Ascending aorta (tissue), 2 donors: ENCODE measurements at regions of chr10 and their contacts with region 1.

Region 1: GRCh38 chr10:69425511-69426298 is 9.0 kb upstream of the TACR2 start:
- DNase-seq: no peak
- H3K4me3 ChIP-seq: no peak overlapping the region
- H3K27ac ChIP-seq: no peak overlapping the region
- H3K4me1 ChIP-seq: no peaks in the 10 kb centered on the region
- H3K27me3 ChIP-seq: no peaks in the 10 kb centered on the region
- CTCF ChIP-seq: no peak

Region 2: GRCh38 chr10:69479240-69480067 is 53.7 kb after region 1 on chr10:
- intact Hi-C with region 1: no loop called
- DNase-seq: no peak
- H3K4me3 ChIP-seq: no peak overlapping the region
- H3K27ac ChIP-seq: peak overlapping the region; percentile 83 to 87
- H3K4me1 ChIP-seq: peaks cover 20 to 29% of the 10 kb centered on the region in 2 donors
- H3K27me3 ChIP-seq: no peaks in the 10 kb centered on the region
- CTCF ChIP-seq: no peak

Region 3: DNA sequence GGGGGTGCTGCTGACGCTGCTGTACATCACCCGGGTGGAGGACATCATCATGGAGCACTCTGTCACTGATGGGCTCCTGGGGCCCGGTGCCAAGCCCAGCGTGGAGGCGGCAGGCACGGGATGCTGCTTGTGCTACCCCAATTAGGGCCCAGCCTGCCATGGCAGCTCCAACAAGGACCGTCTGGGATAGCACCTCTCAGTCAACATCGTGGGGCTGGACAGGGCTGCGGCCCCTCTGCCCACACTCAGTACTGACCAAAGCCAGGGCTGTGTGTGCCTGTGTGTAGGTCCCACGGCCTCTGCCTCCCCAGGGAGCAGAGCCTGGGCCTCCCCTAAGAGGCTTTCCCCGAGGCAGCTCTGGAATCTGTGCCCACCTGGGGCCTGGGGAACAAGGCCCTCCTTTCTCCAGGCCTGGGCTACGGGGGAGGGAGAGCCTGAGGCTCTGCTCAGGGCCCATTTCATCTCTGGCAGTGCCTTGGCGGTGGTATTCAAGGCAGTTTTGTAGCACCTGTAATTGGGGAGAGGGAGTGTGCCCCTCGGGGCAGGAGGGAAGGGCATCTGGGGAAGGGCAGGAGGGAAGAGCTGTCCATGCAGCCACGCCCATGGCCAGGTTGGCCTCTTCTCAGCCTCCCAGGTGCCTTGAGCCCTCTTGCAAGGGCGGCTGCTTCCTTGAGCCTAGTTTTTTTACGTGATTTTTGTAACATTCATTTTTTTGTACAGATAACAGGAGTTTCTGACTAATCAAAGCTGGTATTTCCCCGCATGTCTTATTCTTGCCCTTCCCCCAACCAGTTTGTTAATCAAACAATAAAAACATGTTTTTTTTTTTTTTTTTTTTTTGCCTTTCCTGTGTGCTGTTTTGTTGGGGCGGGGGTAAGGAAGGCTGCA is 81.4 kb after region 1 on chr10:
- intact Hi-C with region 1: loop called (anchors 1 kb)
- DNase-seq: no peak
- H3K4me3 ChIP-seq: no peak overlapping the region
- H3K27ac ChIP-seq: no peak overlapping the region
- H3K4me1 ChIP-seq: peaks cover 0 to 4% of the 10 kb centered on the region in 2 donors
- H3K27me3 ChIP-seq: no peaks in the 10 kb centered on the region
- CTCF ChIP-seq: no peak

Region 4: GRCh38 chr10:69639291-69640195 is 213.8 kb after region 1 on chr10:
- intact Hi-C with region 1: loop called (anchors 5 kb)
- DNase-seq: peak in 1 of 2 donors; percentile 72
- H3K4me3 ChIP-seq: no peak overlapping the region
- H3K27ac ChIP-seq: no peak overlapping the region
- H3K4me1 ChIP-seq: peaks cover 0 to 4% of the 10 kb centered on the region in 2 donors
- H3K27me3 ChIP-seq: no peaks in the 10 kb centered on the region
- CTCF ChIP-seq: peak; percentile 70 to 86 (median 73)